Posterior vena cava (tissue), 2 donors: ENCODE measurements at regions of chr7 and their contacts with region 1.

Region 1: DNA sequence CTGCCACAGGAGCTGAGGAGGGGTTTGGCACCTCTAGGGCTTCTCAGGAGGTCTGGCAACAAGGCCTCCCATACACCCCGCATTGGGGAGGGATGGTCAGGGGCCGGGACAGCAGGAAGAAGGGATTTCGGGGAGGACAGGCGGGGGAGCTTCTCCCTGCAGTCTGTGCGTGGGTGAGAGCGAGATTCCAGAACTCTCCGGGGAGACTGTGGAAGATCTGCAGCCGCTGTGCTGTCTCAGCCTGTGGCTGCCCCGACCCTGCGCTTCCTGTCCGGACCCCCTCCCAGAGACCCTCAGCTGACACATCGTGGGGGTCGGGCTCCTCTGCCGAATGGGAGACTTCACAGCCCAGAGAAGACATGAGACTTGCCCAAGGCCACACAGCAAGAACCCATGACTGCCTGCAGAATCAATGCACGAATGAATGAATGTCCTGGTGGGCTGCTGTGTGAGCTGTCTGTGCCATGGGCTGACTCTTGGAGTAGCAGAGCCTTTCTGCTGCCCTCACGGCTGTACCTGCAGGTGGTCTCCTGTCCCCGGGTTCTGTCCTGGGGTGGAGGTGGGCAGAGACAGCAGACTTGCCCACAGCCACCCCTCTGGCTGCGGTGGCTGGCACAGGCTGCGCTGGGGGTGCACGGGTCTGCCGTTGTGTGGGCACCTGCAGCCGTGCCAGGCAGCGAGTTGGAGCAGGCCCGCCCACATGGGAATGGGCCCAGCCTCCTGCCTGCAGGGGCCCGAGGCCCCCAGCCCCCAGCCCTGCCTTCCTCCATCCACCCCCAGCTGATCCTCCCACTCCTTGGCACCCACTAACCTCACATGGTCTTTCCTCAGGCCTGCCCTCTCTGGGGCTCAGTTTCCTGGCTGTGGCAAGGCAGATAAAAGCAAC is 16.3 kb upstream of the LFNG start:
- DNase-seq: no peak

Region 2: DNA sequence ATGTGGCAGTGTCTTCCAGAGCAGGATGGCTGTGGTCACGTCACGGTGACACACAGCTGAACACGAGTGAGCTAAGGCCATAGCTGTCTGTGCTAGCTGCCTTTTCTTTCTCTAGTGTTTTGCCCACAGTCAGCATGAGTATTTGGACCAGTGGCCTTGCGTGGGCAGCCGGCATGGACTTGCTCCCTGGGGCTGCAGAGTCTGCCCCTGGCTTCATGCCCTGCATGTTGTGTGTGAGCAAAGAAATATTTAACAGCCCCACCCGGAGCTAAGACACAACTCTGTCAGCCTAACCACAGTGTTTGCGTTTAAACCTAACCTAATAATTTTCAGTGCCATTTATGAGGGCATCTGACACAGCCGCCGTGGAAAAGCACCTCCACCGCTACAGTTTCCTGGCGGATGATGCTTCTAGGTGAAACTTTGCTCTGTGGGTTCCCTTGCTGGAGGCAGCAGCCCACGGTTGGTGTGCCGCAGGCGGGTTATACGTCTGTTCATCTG is 85.3 kb before region 1 on chr7:
- intact Hi-C with region 1: no loop called
- DNase-seq: no peak

Region 3: DNA sequence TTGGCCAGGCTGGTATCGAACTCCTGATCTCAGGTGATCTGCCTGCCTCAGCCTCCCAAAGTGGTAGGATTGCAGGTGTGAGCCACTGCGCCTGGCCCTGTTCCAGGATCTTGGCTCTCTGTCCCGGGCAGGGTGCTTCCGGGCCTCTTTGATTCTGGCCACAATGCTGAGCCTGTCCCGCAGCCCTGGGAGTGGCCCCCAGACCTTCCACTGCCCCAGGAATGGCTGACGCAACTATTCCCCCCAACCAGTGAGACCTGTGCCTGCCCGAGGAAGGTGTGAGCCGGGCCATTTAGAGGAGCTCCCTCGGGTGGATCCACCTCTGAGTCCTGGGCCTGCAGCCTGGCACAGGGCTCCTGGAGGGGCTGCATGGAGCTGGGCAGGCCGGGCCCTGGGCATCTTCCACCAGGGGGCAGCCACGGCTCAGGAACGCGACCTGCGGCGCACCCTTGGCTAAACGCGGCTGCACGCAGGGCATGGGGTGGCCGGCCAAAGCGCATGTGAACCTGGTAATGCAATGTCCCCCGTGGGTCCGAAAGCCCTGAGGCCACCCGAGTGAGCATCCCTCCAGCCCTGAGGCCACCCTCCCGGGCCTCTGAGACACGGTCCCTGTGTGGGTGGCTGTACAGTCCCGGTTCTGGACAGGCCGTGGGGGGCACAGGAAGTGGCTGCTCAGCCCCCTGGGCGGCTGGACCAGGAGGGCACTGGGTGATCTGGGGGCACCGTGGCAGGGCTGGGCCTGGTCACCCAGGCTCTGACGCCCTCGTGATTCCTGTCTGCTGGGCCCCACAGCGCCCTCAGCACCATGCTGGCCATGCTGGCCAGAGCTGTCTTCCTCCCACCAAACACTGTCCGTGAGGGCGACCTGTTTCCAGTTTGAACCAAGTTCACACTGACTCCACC is 51.9 kb before region 1 on chr7:
- intact Hi-C with region 1: loop called in 1 of 2 experiments (anchors 1 kb)
- DNase-seq: peak; percentile 96

Region 4: GRCh38 chr7:2542026-2542915 is 39.0 kb after region 1 on chr7:
- intact Hi-C with region 1: loop called in 1 of 2 experiments (anchors 1 kb)
- DNase-seq: peak; percentile 76

Region 5: DNA sequence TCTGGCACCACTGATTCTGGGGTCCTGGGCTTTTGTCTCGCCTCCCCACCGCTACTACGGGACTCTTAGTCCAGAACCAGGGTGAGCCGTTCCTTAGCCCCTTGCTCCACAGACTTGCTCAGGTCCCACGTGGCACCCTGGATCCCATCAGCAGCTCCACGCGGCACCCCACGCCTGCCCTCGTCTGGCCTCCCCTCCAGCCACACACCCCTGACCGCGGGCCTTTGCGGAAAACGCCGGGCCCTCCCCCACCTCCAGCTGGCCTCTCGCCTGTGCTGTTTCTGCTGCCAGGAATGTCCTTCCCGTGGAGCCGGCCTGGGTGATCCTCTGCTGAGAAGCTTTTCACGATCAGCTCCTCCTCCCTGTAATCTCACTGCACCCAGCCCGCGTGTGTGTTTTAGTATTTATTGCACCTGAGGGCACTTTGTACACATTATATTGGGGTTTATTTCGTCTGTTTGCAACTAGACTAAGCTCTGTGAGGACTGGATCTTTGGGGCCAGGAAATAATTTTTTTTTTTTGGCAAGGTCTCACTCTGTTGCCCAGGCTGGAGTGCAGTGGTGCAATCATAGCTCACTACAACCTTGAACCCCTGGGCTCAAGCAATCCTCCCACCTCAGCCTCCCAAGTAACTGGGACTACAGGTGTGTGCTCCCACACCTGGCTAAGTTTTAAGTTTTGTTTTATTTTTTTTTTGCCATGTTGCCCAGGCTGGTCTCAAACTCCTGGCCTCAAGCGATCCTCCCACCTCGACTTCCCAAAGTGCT is 117.9 kb after region 1 on chr7:
- intact Hi-C with region 1: no loop called
- DNase-seq: no peak